ENCODE measurements at regions of chr11 and their contacts with region 1.

Region 1: GRCh38 chr11:78645226-78646202 is 70.8 kb upstream of the NARS2 start:
- DNase-seq: peak; percentile 87
- ATAC-seq: peak; percentile 94
- H3K4me3 Mint-ChIP-seq: no peak overlapping the region
- H3K27ac Mint-ChIP-seq: no peak overlapping the region
- H3K4me1 Mint-ChIP-seq: peaks cover under 1% of the 10 kb centered on the region
- H3K27me3 Mint-ChIP-seq: no peaks in the 10 kb centered on the region
- CTCF ChIP-seq: peak; percentile 93

Region 2: DNA sequence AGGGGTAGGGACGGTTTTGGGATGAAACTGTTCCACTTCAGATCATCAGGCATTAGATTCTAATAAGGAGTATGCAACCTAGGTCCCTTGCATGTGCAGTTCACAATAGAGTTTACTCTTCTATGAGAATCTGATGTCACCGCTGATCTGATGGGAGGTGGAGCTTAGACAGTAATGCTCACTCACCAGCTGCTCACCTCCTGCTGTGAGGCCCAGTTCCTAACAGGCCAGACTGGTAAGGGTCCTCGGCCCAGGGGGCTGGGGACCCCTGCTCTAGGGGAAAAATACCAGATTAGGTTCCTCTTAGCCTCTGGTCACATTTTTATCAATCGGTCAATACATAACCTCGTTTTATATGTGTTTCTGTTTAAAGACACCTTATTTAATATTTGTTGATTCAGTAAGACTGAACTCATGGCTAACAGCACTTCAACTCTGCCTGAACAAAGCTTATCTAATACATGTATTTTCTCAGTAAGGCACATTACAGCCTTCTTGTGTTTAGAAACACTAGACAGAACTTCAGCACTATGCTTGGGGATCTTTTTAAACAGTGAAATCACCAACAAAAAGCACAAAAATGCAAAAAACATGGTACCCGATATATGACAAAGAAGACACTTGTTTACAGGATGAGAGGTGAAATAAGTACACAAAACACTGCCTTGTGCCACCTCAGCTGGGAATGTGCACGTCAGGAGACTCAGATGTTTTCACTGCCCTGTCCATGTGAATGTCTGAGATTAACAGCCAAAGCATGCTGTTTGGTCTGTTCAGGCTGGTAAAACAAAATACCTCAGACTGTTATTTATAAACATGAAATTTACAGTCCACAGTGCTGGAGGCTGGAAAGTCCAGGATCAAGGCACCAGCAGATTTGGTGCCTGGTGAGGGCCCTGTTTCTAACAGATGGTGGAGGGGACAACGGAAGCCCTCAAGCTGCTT is 349.3 kb before region 1 on chr11:
- CTCF ChIA-PET with region 1: no interaction called
- POLR2A ChIA-PET with region 1: no interaction called
- DNase-seq: peak; percentile 16
- ATAC-seq: no peak
- H3K4me3 Mint-ChIP-seq: no peak overlapping the region
- H3K27ac Mint-ChIP-seq: no peak overlapping the region
- H3K4me1 Mint-ChIP-seq: no peaks in the 10 kb centered on the region
- H3K27me3 Mint-ChIP-seq: no peaks in the 10 kb centered on the region
- CTCF ChIP-seq: no peak

Region 3: GRCh38 chr11:78595436-78596130 is 49.9 kb before region 1 on chr11:
- CTCF ChIA-PET with region 1: no interaction called
- POLR2A ChIA-PET with region 1: no interaction called
- DNase-seq: no peak
- ATAC-seq: peak; percentile 43
- H3K4me3 Mint-ChIP-seq: no peak overlapping the region
- H3K27ac Mint-ChIP-seq: no peak overlapping the region
- H3K4me1 Mint-ChIP-seq: peaks cover 30% of the 10 kb centered on the region
- H3K27me3 Mint-ChIP-seq: peaks cover 4% of the 10 kb centered on the region
- CTCF ChIP-seq: no peak

Region 4: DNA sequence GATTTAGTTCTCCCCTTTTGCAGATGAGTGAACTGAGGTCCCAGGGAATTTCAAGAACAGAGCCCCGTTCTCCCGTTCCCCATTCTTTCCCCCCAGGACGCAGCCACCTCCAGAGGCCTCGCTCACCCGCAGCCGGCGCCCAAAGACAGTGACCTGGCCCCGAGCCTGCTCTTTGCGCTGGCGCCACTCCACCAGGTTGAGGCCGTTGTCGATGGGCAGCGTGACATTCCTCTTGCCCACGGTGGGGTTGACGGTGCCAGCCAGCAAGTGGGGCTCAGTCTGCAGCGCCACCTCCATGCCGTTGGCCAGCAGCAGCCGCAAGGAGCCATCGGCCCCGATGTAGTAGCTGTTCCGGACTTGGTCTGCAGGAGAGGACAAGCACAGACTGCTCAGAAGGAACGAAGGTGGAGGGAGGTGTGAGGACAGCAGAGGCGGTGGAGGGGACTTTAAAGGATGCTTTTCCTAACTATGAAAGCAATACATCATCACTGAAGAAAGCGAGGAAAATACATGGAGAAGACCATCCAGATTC is 30.6 kb after region 1 on chr11:
- CTCF ChIA-PET with region 1: interaction called, 30 read pairs
- POLR2A ChIA-PET with region 1: no interaction called
- DNase-seq: no peak
- ATAC-seq: peak; percentile 74
- H3K4me3 Mint-ChIP-seq: no peak overlapping the region
- H3K27ac Mint-ChIP-seq: no peak overlapping the region
- H3K4me1 Mint-ChIP-seq: peaks cover 2% of the 10 kb centered on the region; the same call in 1 of the 2 replicates
- H3K27me3 Mint-ChIP-seq: no peaks in the 10 kb centered on the region
- CTCF ChIP-seq: no peak

Region 5: GRCh38 chr11:78722786-78723185 is 77.3 kb after region 1 on chr11:
- CTCF ChIA-PET with region 1: interaction called, 396 read pairs
- POLR2A ChIA-PET with region 1: no interaction called
- DNase-seq: no peak
- ATAC-seq: no peak
- H3K4me3 Mint-ChIP-seq: no peak overlapping the region
- H3K27ac Mint-ChIP-seq: no peak overlapping the region
- H3K4me1 Mint-ChIP-seq: no peaks in the 10 kb centered on the region
- H3K27me3 Mint-ChIP-seq: no peaks in the 10 kb centered on the region
- CTCF ChIP-seq: no peak

Region 6: DNA sequence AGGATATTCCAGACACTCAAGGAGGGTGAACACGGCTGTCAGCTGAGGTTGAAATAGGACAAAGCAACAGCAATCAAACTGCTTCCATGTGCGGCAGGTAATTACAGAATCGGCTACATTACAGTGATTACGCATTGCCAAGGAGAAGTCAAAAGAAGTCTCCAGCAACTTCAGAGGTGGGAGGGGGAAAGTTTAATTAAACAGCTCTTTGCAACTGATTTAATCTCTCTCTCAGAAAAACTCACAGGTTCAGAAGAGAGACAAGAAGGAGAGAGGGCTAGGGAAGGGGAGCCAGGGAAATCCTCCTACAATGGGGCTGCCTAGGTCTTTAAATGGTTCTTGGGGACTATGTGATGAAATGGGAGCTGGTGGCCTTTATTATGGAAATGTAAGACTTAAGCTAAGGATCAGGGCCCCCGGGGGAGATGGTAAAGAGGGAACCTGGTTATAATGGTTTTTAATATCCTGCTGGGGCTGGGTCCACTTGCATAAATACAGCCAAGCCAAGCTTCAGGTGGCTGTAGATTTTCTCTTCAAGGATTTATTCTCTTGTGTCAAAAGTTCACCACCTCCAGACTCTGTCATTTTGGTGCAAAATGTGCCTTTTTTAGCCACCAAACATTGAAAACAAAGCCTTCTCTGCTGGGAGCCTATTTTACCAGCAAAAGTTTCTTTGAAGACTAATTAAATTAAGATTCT is 283.8 kb after region 1 on chr11:
- CTCF ChIA-PET with region 1: interaction called, 10 read pairs
- POLR2A ChIA-PET with region 1: no interaction called
- DNase-seq: peak; percentile 52
- ATAC-seq: peak; percentile 94
- H3K4me3 Mint-ChIP-seq: peak overlapping the region; percentile 48
- H3K27ac Mint-ChIP-seq: peak overlapping the region; percentile 53
- H3K4me1 Mint-ChIP-seq: peaks cover 58% of the 10 kb centered on the region
- H3K27me3 Mint-ChIP-seq: peaks cover 98% of the 10 kb centered on the region
- CTCF ChIP-seq: no peak

Region 7: DNA sequence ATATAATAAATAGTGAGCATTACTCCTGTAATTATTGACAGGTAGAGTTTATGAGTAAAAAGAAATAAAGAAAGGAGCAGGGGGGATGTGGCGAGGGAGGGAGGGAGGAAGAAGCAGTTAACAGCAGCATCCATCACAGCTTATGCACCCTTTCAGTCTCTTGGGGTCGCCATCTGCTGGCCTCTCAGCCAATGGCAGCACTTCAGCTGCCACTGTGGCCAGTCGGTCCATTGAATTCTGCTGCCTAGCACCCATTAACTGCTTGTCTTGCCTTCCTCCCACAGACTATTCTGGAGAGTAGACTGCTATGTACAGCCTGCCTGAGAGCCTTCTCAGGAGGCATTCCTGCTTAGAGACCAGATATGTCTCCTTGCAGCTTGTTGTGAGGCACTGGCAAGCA is 407.0 kb after region 1 on chr11:
- CTCF ChIA-PET with region 1: interaction called, 21 read pairs
- POLR2A ChIA-PET with region 1: no interaction called
- DNase-seq: peak; percentile 55
- ATAC-seq: peak; percentile 94
- H3K4me3 Mint-ChIP-seq: no peak overlapping the region
- H3K27ac Mint-ChIP-seq: no peak overlapping the region
- H3K4me1 Mint-ChIP-seq: peaks cover 9% of the 10 kb centered on the region
- H3K27me3 Mint-ChIP-seq: no peaks in the 10 kb centered on the region
- CTCF ChIP-seq: peak; percentile 30; the same call in 1 of the 2 replicates